Common myeloid progenitor, CD34-positive (primary cell): ENCODE measurements at regions of chr15 and their contacts with region 1.

Region 1: GRCh38 chr15:68536331-68537095 is 42.3 kb upstream of the CORO2B start:
- DNase-seq: no peak
- H3K4me3 ChIP-seq: no peak overlapping the region
- H3K27ac ChIP-seq: no peak overlapping the region
- H3K4me1 ChIP-seq: peaks cover 0 to 3% (median 0%) of the 10 kb centered on the region in 4 experiments
- H3K27me3 ChIP-seq: peaks cover 0 to 6% (median 0%) of the 10 kb centered on the region in 5 experiments

Region 2: DNA sequence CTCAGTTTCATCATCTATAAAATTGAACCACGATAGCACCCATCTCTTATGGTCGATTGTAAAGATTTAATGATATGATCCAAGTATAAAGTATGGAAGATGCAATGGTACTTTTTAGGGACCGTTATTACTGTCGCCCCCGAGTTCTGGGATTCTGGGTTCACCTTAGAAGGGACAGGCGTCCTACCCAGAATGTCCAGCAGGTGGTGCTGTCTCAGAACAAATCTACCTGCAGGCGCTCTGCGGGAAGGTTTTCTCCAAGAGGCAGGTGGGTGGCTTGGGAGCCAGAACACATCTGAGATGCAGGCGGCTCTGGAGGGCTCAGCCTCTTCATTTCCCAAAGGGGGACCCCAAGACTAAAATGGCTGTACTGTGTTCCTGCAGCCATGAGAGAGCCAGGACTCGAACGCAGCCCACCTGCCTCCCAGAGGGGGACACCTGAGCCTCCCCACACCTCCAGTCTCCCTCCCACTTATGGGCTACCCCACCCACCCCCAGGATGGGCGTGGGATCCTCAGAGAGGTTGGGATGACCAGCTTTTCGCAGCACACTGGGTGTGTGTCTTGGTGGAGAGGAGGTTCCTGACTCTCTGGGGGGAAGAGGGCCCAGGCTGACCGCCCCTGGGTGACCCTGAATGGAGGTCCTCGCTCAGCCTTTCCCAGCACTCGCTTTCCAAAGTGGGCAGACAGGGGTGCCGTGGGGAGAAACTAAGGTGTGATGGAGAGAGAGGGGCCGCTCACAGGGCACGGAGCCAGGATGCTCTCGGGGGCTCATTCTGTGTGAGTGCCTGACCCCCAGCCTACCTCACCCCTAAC is 14.2 kb after region 1 on chr15:
- CTCF ChIA-PET with region 1: interaction called, 25 read pairs
- POLR2A ChIA-PET with region 1: no interaction called
- DNase-seq: peak; percentile 59 to 76 (median 66)
- H3K4me3 ChIP-seq: no peak overlapping the region
- H3K27ac ChIP-seq: no peak overlapping the region
- H3K4me1 ChIP-seq: no peaks in the 10 kb centered on the region
- H3K27me3 ChIP-seq: peaks cover 0 to 9% (median 0%) of the 10 kb centered on the region in 5 experiments